Caco-2 (cell line): ENCODE measurements at regions of chr2 and their contacts with region 1.

Region 1: DNA sequence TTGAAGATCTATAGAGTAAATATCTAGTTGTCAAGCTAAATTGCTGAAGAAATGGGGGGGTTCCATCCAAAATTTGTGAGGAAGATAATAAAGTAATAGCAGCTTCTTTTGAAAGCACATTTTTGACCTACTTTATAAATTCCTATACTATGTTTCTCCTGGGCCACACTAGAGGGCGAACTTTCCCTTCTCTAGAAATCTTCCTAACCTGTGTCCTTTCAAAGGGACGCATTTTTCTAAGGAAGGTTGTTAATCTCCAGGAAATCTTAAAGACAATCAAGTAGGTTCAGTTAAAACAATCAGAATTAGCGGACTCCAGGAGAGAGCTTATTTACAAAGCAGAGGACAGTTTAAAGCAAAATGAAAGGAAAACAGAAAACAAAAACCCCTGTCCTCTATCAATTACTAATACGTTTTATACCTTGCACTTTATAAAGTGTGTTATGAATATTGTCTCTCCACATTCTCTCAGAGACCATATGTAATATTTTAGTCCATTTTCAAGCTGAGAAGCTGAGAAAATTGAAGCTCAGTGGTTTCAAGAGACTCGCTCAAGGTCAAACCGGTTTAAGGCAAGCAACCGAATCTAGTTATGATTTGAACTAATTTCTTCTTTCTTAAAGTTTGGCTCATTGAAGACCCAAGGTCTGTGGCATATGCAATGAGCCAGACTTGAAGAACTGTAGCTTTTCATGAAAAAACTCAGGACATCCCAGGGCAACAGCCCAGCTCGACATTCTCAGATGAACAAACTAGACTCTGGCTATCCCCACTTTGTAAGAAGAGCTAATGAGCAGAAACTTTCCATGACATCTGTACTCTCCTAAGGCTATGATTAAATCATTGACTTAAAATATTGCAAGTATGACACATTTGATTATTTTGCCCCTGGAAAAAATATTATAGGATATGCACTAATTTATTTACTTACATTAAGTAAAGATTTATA is 273.6 kb downstream of the PAX3 start:
- DNase-seq: peak in 1 of 2 experiments; percentile 32
- H3K4me3 ChIP-seq: no peak overlapping the region
- H3K4me3 Mint-ChIP-seq: no peak overlapping the region
- H3K27ac Mint-ChIP-seq: no peak overlapping the region
- H3K4me1 ChIP-seq: no peaks in the 10 kb centered on the region; the same call in 1 of the 2 replicates
- H3K4me1 Mint-ChIP-seq: no peaks in the 10 kb centered on the region
- H3K27me3 ChIP-seq: no peaks in the 10 kb centered on the region
- H3K27me3 Mint-ChIP-seq: no peaks in the 10 kb centered on the region
- CTCF ChIP-seq: peak; percentile 63 to 90

Region 2: DNA sequence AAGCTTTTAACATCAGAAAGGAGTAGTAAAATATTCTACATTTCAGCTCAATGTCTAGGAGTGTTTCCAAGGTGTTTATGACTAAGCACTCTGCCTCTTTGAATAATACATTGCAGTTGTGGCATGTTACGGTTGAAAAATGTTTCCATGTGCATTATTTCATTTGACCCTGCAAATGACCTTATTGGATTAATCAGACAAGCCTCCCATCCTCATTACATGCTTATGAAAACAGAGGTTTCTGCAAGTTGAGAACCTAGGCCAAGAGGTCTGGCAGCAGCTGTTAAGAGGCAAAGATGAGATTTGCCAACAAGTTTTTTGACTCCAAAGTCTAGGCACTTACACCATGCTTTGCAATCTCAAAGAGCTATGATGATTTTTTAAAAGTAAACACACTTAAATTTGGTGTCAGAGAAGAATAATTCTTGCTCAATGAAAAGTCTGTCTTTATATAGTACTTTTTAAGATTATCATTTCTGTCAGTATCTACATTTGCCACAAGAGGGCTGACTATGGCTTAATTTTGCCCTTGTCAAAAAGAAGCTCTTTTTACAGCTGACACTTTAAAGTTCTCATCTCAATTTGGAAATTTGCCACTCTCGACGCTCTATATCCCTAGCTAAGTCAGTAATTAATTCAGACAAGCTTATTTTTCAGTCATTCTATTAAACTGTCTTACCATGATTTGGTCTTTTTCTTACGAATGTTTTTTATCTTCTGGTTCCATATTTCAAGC is 13.0 kb after region 1 on chr2:
- CTCF ChIA-PET with region 1: interaction called, 14 read pairs
- POLR2A ChIA-PET with region 1: no interaction called
- intact Hi-C with region 1: no loop called
- DNase-seq: peak in 1 of 2 experiments; percentile 18
- H3K4me3 ChIP-seq: no peak overlapping the region
- H3K4me3 Mint-ChIP-seq: no peak overlapping the region
- H3K27ac Mint-ChIP-seq: no peak overlapping the region
- H3K4me1 ChIP-seq: no peaks in the 10 kb centered on the region
- H3K4me1 Mint-ChIP-seq: no peaks in the 10 kb centered on the region
- H3K27me3 ChIP-seq: no peaks in the 10 kb centered on the region
- H3K27me3 Mint-ChIP-seq: no peaks in the 10 kb centered on the region
- CTCF ChIP-seq: peak; percentile 61 to 63

Region 3: DNA sequence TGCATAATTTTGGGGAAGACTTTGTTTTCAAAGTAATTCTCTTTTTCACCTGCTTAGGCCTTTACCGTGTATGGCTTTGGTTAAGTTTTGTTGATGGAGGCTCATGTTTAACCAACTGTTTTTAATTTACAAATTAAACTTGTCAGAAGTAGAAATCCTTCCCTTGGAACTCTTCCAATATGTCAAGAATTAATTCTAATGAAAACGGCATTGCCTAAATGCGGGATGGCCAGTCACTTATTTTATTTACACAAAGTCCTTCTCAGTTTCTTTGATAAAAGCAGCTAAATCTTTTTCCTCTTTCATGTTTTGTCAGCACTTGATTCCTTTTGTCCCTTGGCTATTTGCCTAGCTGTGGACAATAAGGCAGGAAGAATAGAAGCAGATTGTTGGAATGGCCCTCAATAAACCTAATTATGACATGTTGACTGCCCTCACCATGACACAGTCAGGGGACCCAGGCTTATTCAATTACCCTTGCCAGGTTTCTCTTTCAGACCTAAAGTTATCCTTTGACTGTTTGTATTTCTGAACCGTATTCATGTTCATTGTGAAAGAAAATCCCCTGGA is 247.3 kb after region 1 on chr2:
- CTCF ChIA-PET with region 1: no interaction called
- POLR2A ChIA-PET with region 1: no interaction called
- intact Hi-C with region 1: no loop called
- DNase-seq: no peak
- H3K4me3 ChIP-seq: no peak overlapping the region
- H3K4me3 Mint-ChIP-seq: no peak overlapping the region
- H3K27ac Mint-ChIP-seq: no peak overlapping the region
- H3K4me1 ChIP-seq: no peaks in the 10 kb centered on the region
- H3K4me1 Mint-ChIP-seq: no peaks in the 10 kb centered on the region
- H3K27me3 ChIP-seq: no peaks in the 10 kb centered on the region
- H3K27me3 Mint-ChIP-seq: peaks cover 30% of the 10 kb centered on the region
- CTCF ChIP-seq: no peak